Activated CD4-positive, alpha-beta T cell treated with anti-CD3 and anti-CD28 coated beads for 36 hours (primary cell): ENCODE measurements at regions of chr2 and their contacts with region 1.

Region 1: GRCh38 chr2:177148477-177149154 is 64.0 kb upstream of the HNRNPA3 start:
- DNase-seq: peak; percentile 87
- ATAC-seq: peak; percentile 96
- H3K4me3 Mint-ChIP-seq: peak overlapping the region; percentile 81
- H3K27ac Mint-ChIP-seq: peak overlapping the region; percentile 28
- H3K4me1 Mint-ChIP-seq: peaks cover 14% of the 10 kb centered on the region
- H3K27me3 Mint-ChIP-seq: peaks cover 32% of the 10 kb centered on the region

Region 2: GRCh38 chr2:175690113-175690837 is 1458.3 kb before region 1 on chr2:
- CTCF ChIA-PET with region 1: no interaction called
- POLR2A ChIA-PET with region 1: no interaction called
- intact Hi-C with region 1: loop called in 1 of 2 experiments (anchors 5 kb)
- DNase-seq: peak; percentile 19
- ATAC-seq: no peak
- H3K4me3 Mint-ChIP-seq: no peak overlapping the region
- H3K27ac Mint-ChIP-seq: no peak overlapping the region
- H3K4me1 Mint-ChIP-seq: no peaks in the 10 kb centered on the region
- H3K27me3 Mint-ChIP-seq: peaks cover 18% of the 10 kb centered on the region

Region 3: GRCh38 chr2:176454893-176455811 is 693.5 kb before region 1 on chr2:
- CTCF ChIA-PET with region 1: no interaction called
- POLR2A ChIA-PET with region 1: no interaction called
- intact Hi-C with region 1: loop called in 1 of 2 experiments (anchors 5 kb)
- DNase-seq: peak; percentile 91
- ATAC-seq: peak; percentile 57
- H3K4me3 Mint-ChIP-seq: no peak overlapping the region
- H3K27ac Mint-ChIP-seq: no peak overlapping the region
- H3K4me1 Mint-ChIP-seq: no peaks in the 10 kb centered on the region
- H3K27me3 Mint-ChIP-seq: peaks cover 31% of the 10 kb centered on the region

Region 4: DNA sequence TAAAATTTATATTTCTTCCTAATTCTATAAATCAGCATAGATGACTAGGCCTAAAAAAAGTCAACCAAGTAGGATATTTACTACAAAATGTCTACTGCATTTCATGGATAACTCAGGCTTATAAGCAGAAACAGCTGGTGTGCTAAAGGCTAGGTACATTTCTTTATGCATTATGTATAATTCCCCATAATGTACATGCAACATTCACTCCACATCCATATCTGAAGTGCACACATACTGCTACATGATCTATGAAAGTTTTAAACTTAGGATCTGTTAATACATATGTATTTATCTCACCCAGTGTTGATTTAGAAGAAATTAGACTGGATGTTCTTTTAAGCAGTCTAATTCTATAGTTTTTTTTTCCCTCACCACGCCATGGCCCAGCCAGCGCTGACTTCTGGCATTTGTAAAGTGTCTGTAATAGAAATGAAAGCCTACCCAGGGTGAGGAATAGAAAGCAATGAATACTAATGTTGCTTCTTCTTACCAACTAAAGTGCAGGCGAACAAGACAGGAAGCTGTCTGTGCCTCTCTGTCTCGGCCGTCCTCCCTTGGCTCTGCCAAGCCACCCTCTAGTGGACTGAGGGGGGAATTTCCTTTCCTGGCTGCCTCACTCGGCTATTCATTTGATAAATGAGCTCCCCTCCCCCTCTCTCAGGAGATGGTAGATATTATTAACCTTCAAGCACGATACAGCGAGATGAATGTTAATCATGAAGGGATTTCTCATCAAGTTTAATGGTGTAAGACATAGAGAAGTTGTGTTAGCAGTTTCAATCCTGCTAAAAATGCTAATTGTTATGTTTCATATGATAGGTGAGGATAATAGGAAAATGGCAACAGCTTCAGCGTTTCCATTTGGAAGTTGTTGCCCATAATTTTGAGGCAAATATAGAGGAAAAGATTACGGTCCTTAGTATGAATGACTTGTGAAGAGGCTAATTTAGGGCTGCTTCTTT is 494.9 kb before region 1 on chr2:
- CTCF ChIA-PET with region 1: interaction called, 10 read pairs
- POLR2A ChIA-PET with region 1: no interaction called
- intact Hi-C with region 1: loop called (anchors 1 to 2 kb)
- DNase-seq: peak; percentile 60
- ATAC-seq: peak; percentile 69
- H3K4me3 Mint-ChIP-seq: no peak overlapping the region
- H3K27ac Mint-ChIP-seq: no peak overlapping the region
- H3K4me1 Mint-ChIP-seq: peaks cover 8% of the 10 kb centered on the region
- H3K27me3 Mint-ChIP-seq: peaks cover 41% of the 10 kb centered on the region

Region 5: GRCh38 chr2:176931588-176932563 is 216.7 kb before region 1 on chr2:
- CTCF ChIA-PET with region 1: no interaction called
- POLR2A ChIA-PET with region 1: no interaction called
- intact Hi-C with region 1: loop called (anchors 5 to 10 kb)
- DNase-seq: peak; percentile 42
- ATAC-seq: peak; percentile 96
- H3K4me3 Mint-ChIP-seq: no peak overlapping the region
- H3K27ac Mint-ChIP-seq: peak overlapping the region; percentile 59
- H3K4me1 Mint-ChIP-seq: peaks cover 10% of the 10 kb centered on the region
- H3K27me3 Mint-ChIP-seq: peaks cover 2% of the 10 kb centered on the region

Region 6: DNA sequence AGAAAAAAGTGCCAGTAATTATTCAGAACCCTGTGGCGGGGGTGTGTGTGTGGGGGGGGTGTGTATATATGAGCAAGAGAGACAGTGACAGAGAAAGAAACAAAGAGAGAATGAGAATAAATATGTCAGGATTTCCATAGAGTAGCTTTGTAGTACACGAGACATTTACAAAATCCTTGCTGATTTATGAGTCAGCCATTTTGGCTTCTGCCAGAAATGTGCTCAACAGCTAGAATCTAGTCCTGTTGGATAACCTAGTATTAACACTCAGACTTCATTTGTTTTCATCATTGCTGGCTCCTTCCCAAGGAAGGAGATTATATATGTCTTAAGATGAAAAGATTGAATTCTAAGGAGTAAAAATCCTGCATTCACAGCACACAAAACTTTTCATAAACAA is 76.5 kb before region 1 on chr2:
- CTCF ChIA-PET with region 1: interaction called, 6 read pairs
- POLR2A ChIA-PET with region 1: no interaction called
- intact Hi-C with region 1: loop called in 1 of 2 experiments (anchors 5 kb)
- DNase-seq: no peak
- ATAC-seq: peak; percentile 66
- H3K4me3 Mint-ChIP-seq: no peak overlapping the region
- H3K27ac Mint-ChIP-seq: no peak overlapping the region
- H3K4me1 Mint-ChIP-seq: no peaks in the 10 kb centered on the region
- H3K27me3 Mint-ChIP-seq: peaks cover 22% of the 10 kb centered on the region

Region 7: GRCh38 chr2:177175917-177176668 is 27.5 kb after region 1 on chr2:
- CTCF ChIA-PET with region 1: no interaction called
- POLR2A ChIA-PET with region 1: no interaction called
- intact Hi-C with region 1: no loop called
- DNase-seq: no peak
- ATAC-seq: no peak
- H3K4me3 Mint-ChIP-seq: no peak overlapping the region
- H3K27ac Mint-ChIP-seq: no peak overlapping the region
- H3K4me1 Mint-ChIP-seq: peaks cover 5% of the 10 kb centered on the region
- H3K27me3 Mint-ChIP-seq: no peaks in the 10 kb centered on the region